Colonic mucosa (tissue), 4 donors: ENCODE measurements at regions of chr14 and their contacts with region 1.

Region 1: GRCh38 chr14:53539489-53540126 is 386.5 kb upstream of the DDHD1 start:
- DNase-seq: peak; percentile 81
- H3K4me3 ChIP-seq: no peak overlapping the region
- H3K27ac ChIP-seq: peak overlapping the region; percentile 29
- H3K4me1 ChIP-seq: no peaks in the 10 kb centered on the region
- H3K27me3 ChIP-seq: no peaks in the 10 kb centered on the region
- CTCF ChIP-seq: peak; percentile 75

Region 2: GRCh38 chr14:53946404-53947096 is 406.9 kb after region 1 on chr14:
- intact Hi-C with region 1: loop called (anchors 10 kb)
- DNase-seq: no peak
- H3K4me3 ChIP-seq: peak overlapping the region; percentile 32
- H3K27ac ChIP-seq: no peak overlapping the region
- H3K4me1 ChIP-seq: no peaks in the 10 kb centered on the region
- H3K27me3 ChIP-seq: peaks cover 4% of the 10 kb centered on the region
- CTCF ChIP-seq: no peak

Region 3: DNA sequence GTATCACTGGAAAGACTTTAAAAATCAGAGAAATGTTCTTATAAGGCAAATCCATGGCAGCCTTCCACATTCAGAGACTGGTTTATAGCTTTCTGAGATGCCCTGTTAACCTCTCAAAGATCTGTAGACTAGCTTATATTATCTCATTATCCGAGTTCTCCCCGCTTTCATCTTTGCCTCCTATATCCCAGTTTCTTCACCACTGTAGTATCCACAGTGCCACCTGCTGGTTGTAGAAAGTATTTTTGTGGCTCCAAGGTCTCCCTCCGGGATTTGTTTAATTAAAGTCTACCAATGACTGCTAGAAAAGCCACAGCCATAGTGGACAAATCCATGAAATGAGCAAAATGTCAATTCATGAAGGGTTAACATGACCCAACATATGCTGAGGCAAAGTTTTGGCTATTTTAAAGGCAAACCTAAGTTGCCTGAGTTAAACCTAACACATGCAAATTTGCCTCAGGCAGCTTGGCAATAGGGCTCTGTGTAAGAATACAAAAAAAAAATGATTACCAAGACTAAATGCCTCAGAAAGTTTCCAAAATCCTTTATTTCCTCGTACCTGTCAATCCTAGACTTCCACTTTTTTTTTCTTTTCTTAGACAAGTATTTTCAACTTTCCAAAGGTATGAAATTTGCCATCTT is 635.8 kb after region 1 on chr14:
- intact Hi-C with region 1: loop called (anchors 5 kb)
- DNase-seq: peak; percentile 83
- H3K4me3 ChIP-seq: no peak overlapping the region
- H3K27ac ChIP-seq: no peak overlapping the region
- H3K4me1 ChIP-seq: no peaks in the 10 kb centered on the region
- H3K27me3 ChIP-seq: no peaks in the 10 kb centered on the region
- CTCF ChIP-seq: peak; percentile 79

Region 4: DNA sequence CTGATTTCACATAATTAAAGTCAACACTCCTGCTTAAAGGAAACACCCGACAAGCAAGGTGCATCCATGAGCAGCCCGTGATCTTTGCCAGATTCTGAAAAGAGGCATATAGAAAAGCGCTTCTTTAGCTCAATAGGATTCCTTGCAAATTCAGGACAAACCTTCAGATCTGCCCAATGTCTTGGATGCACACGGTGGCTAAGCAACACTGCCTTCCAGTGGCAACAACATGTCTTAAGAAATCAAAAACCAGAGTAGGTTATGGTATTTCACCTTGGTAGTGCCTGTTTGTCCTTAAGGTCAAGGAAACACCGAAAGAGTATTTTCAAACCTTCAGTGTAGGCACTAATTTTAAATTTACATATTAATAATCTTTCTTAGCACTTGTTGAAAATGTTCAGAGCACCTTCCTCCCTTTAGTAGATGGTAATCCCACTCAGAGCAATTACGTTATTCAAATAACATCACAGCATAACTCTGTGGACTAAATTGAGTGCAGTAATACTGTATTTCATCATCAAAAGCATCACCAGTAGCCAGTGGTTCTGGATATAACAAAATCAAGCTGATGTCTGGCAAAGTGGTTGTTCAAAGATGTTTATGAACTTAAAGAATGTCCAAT is 799.2 kb after region 1 on chr14:
- intact Hi-C with region 1: loop called (anchors 5 kb)
- DNase-seq: no peak
- H3K4me3 ChIP-seq: no peak overlapping the region
- H3K27ac ChIP-seq: no peak overlapping the region
- H3K4me1 ChIP-seq: no peaks in the 10 kb centered on the region
- H3K27me3 ChIP-seq: no peaks in the 10 kb centered on the region
- CTCF ChIP-seq: peak; percentile 21